Activated CD4-positive, alpha-beta T cell treated with anti-CD3 and anti-CD28 coated beads, Interleukin-2, amount 10 ng/mL, durations not matched to agents 24 days and 14 days (primary cell): ENCODE measurements at regions of chr10 and their contacts with region 1.

Region 1: GRCh38 chr10:22805283-22805682 is 90.9 kb upstream of the PIP4K2A start:
- DNase-seq: peak; percentile 32
- H3K4me3 Mint-ChIP-seq: no peak overlapping the region
- H3K27ac Mint-ChIP-seq: no peak overlapping the region
- H3K4me1 Mint-ChIP-seq: no peaks in the 10 kb centered on the region
- H3K27me3 Mint-ChIP-seq: peaks cover 11% of the 10 kb centered on the region

Region 2: DNA sequence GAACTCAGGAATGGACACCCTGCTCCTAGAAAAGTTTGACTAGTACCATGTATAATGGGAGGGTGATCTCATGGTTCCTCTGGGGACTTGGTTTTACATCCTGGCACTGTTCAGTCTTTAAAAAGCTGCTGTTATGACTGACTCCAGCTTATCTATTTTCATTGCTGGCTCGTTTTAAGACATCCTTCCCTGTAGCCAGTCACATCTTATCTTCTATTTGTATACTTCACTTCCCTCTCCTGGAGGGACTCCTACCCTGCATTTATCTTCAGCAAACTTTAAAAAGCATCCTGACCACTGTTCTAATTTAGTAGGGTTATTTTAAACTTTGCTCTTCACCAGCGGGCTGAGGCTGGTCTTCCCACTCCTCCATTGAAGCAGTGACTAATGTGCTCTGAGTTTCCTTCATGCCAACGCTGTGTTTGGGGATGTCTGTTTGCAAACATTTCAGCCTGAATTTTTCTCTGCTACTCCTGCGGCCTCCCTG is 49.7 kb after region 1 on chr10:
- intact Hi-C with region 1: loop called (anchors 10 kb)
- DNase-seq: no peak
- H3K4me3 Mint-ChIP-seq: no peak overlapping the region
- H3K27ac Mint-ChIP-seq: no peak overlapping the region
- H3K4me1 Mint-ChIP-seq: no peaks in the 10 kb centered on the region
- H3K27me3 Mint-ChIP-seq: no peaks in the 10 kb centered on the region